GM12878 (cell line): ENCODE measurements at regions of chr17 and their contacts with region 1.

Region 1: DNA sequence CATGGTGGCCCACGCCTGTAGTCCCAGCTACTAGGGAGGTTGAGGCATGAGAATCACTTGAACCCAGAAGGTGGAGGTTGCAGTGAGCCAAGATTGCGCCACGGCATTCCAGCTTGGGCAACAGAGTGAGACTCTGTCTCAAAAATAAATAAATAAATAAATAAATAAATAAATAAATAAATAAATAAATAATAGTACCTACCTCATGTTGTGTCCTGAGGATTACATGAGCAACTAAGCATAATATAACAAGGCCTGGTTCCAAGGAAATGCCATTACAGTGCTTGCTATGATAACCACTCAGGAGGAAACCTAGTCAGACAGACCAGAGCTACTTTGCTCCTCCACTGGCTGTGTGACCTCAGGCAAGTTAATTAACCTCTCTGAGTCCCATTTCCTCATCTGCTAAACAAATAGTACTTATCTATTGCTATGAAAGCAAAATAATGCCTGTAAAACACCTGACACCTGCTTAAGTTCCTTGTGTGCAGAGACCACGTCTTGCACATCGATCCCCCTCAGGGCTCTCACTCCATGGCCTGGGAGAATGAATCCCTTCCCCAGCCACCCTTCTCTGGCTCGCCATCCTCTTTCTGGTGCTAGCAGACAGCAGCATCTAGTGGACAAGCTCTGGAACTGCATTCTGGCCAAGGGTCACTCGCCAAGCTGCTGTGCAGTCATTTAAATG is 7.5 kb downstream of the EPOP start:
- DNase-seq: no peak
- ATAC-seq: peak; percentile 76
- H3K4me3 ChIP-seq: no peak overlapping the region
- H3K27ac ChIP-seq: no peak overlapping the region
- H3K4me1 ChIP-seq: peaks cover 5% of the 10 kb centered on the region
- H3K27me3 ChIP-seq: peaks cover 6 to 11% of the 10 kb centered on the region in 2 experiments; a peak in 3 of 4 replicates
- CTCF ChIP-seq: peak; percentile 100; a peak in 5 of 6 replicates
- EP300 ChIP-seq: no peak
- POLR2A ChIP-seq: no peak
- RAD21 ChIP-seq: peak; percentile 100

Region 2: DNA sequence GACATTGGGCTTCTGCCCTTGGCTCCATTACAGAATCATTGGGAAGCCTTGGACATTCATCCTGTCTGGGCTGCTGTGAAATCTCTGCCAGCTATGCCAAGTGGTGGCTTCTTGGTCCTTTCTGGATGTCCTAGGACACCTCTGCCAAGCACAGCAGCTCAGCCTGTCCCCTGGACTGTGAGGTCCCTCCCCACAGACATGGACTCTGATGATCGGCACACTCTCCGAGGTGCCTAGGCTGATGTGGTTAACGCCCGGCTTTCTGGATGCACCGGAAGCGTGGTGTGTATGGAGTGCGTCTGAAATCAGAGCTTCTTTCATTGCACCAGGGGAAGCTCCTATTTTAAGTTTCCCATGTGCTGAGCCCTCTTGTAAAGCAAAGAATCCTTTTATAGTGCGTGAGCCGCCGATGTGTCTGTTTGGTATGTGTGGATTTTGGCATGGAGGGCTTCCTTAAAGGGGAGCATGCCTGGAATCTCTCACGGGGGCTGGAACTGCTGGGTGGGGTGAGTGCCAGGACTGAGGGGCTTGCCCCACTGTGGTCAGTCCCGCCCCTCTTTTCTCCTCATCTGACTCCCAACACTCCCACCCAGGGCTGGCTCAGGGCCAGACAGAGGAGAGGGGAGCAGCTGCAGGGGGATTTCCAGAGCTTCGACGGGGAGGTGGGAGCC is 245.9 kb before region 1 on chr17:
- CTCF ChIA-PET with region 1: interaction called, 10 read pairs
- POLR2A ChIA-PET with region 1: no interaction called
- RAD21 ChIA-PET with region 1: interaction called, 4 read pairs
- SMC1A ChIA-PET with region 1: interaction called, 12 read pairs
- in situ Hi-C with region 1: no loop called
- intact Hi-C with region 1: loop called (anchors 1 kb)
- DNase-seq: no peak
- ATAC-seq: no peak
- H3K4me3 ChIP-seq: no peak overlapping the region
- H3K27ac ChIP-seq: no peak overlapping the region
- H3K4me1 ChIP-seq: peaks cover 6% of the 10 kb centered on the region
- H3K27me3 ChIP-seq: peaks cover 4 to 6% of the 10 kb centered on the region in 2 experiments; a peak in 3 of 4 replicates
- CTCF ChIP-seq: no peak
- EP300 ChIP-seq: no peak
- POLR2A ChIP-seq: no peak
- RAD21 ChIP-seq: no peak

Region 3: DNA sequence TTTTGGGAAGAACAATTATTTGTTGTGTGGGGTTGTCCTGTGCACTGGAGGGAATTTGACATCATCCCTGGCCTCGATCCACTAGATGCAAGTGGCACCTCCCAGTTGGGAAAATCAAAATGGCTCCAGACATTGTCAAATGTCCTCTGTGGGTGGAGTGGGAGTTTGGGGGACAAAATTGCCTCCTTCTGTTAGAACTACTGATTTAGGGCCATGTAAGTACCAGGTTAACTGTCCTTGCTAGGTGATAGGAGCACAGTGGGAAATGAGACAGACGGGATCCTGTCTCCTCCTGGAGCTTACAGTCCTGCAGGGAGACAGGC is 182.1 kb before region 1 on chr17:
- CTCF ChIA-PET with region 1: interaction called, 79 read pairs
- POLR2A ChIA-PET with region 1: no interaction called
- RAD21 ChIA-PET with region 1: interaction called, 8 read pairs
- SMC1A ChIA-PET with region 1: interaction called, 4 read pairs
- in situ Hi-C with region 1: loop called (anchors 5 kb)
- intact Hi-C with region 1: no loop called
- DNase-seq: peak; percentile 21
- ATAC-seq: no peak
- H3K4me3 ChIP-seq: peak overlapping the region; percentile 3; the same call in 1 of the 2 replicates
- H3K27ac ChIP-seq: peak overlapping the region; percentile 50
- H3K4me1 ChIP-seq: peaks cover 17% of the 10 kb centered on the region
- H3K27me3 ChIP-seq: no peaks in the 10 kb centered on the region
- CTCF ChIP-seq: no peak
- EP300 ChIP-seq: no peak
- POLR2A ChIP-seq: no peak
- RAD21 ChIP-seq: no peak

Region 4: GRCh38 chr17:38557836-38558727 is 109.2 kb before region 1 on chr17:
- CTCF ChIA-PET with region 1: interaction called, 492 read pairs
- POLR2A ChIA-PET with region 1: interaction called, 15 read pairs
- RAD21 ChIA-PET with region 1: interaction called, 294 read pairs
- SMC1A ChIA-PET with region 1: interaction called, 227 read pairs
- in situ Hi-C with region 1: loop called (anchors 5 kb)
- intact Hi-C with region 1: loop called (anchors 1 kb)
- DNase-seq: peak; percentile 50
- ATAC-seq: peak; percentile 90
- H3K4me3 ChIP-seq: peak overlapping the region; percentile 60; the same call in 1 of the 2 replicates
- H3K27ac ChIP-seq: no peak overlapping the region
- H3K4me1 ChIP-seq: peaks cover 20% of the 10 kb centered on the region
- H3K27me3 ChIP-seq: peaks cover 15% of the 10 kb centered on the region in 2 experiments
- CTCF ChIP-seq: peak; percentile 93 to 99 (median 96); a peak in 5 of 6 replicates
- EP300 ChIP-seq: no peak
- POLR2A ChIP-seq: no peak
- RAD21 ChIP-seq: peak; percentile 69

Region 5: DNA sequence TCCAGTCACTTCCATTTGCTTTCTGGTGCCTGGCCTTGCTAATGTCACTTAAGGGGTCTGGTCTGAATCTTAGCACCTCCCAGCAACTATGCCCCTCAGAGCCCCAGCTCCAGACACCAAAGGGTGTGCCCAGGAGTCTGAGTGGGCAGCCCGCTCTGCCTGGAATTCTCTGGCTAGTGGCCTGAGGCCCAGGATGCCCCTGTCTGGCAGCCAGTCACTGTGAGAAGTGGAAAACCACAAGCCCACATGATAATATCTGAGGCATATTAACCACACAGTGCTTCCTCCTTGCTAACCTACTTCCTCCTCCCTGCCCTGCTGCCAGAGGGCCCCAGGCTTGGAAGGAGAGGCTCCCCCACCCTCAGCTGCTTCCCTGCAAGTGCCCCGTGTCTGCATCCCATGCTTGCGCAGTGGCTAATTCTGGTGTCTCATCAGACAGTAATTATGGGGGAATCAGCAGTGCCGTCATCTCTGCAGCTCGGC is 75.4 kb before region 1 on chr17:
- CTCF ChIA-PET with region 1: interaction called, 187 read pairs
- POLR2A ChIA-PET with region 1: no interaction called
- RAD21 ChIA-PET with region 1: interaction called, 9 read pairs
- SMC1A ChIA-PET with region 1: interaction called, 8 read pairs
- in situ Hi-C with region 1: no loop called
- intact Hi-C with region 1: loop called (anchors 2 kb)
- DNase-seq: no peak
- ATAC-seq: peak; percentile 76
- H3K4me3 ChIP-seq: no peak overlapping the region
- H3K27ac ChIP-seq: no peak overlapping the region
- H3K4me1 ChIP-seq: peaks cover 26% of the 10 kb centered on the region
- H3K27me3 ChIP-seq: peaks cover 0 to 2% of the 10 kb centered on the region in 2 experiments; a peak in 2 of 4 replicates
- CTCF ChIP-seq: no peak
- EP300 ChIP-seq: no peak
- POLR2A ChIP-seq: no peak
- RAD21 ChIP-seq: no peak

Region 6: DNA sequence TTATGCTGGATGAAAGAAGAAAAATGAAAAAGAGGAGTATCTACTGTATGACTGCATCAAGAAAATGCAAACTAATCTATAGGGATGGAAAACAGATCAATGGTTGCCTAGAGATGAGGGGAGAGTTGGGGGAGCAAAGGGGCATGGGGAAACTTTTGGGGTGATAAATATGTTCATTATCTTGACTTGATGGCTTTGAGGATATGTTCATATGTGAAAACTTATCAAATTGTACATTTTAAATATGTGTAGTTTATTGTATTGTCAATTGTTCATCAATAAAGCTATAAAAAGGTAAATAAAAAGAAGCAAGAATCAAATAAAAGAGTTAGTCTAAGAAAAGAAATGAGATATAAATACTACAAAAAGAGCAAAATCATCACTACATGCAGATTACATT is 41.8 kb before region 1 on chr17:
- CTCF ChIA-PET with region 1: interaction called, 12 read pairs
- POLR2A ChIA-PET with region 1: no interaction called
- RAD21 ChIA-PET with region 1: interaction called, 8 read pairs
- SMC1A ChIA-PET with region 1: interaction called, 7 read pairs
- in situ Hi-C with region 1: no loop called
- intact Hi-C with region 1: no loop called
- DNase-seq: no peak
- ATAC-seq: no peak
- H3K4me3 ChIP-seq: peak overlapping the region; percentile 48; the same call in 1 of the 2 replicates
- H3K27ac ChIP-seq: peak overlapping the region; percentile 18; the same call in 1 of the 2 replicates
- H3K4me1 ChIP-seq: peaks cover 4% of the 10 kb centered on the region
- H3K27me3 ChIP-seq: no peaks in the 10 kb centered on the region
- CTCF ChIP-seq: no peak
- EP300 ChIP-seq: no peak
- POLR2A ChIP-seq: no peak
- RAD21 ChIP-seq: no peak